B cell (primary cell): ENCODE measurements at regions of chr3 and their contacts with region 1.

Region 1: GRCh38 chr3:158097593-158098308 is 8.5 kb downstream of the SHOX2 start:
- DNase-seq: peak; percentile 90
- ATAC-seq: peak; percentile 93
- H3K4me3 ChIP-seq: peak overlapping the region; percentile 41 to 86 (median 72)
- H3K4me3 Mint-ChIP-seq: peak overlapping the region; percentile 97
- H3K27ac ChIP-seq: no peak overlapping the region
- H3K27ac Mint-ChIP-seq: peak overlapping the region; percentile 85
- H3K4me1 ChIP-seq: peaks cover 32 to 39% of the 10 kb centered on the region in 2 donors
- H3K4me1 Mint-ChIP-seq: peaks cover 23% of the 10 kb centered on the region
- H3K27me3 ChIP-seq: peaks cover 3 to 76% (median 69%) of the 10 kb centered on the region in 4 experiments
- H3K27me3 Mint-ChIP-seq: peaks cover 65% of the 10 kb centered on the region
- CTCF ChIP-seq: no peak

Region 2: GRCh38 chr3:158109804-158110657 is 12.3 kb after region 1 on chr3 and contains the start of gene RSRC1:
- CTCF ChIA-PET with region 1: interaction called, 8 read pairs
- POLR2A ChIA-PET with region 1: interaction called, 6 read pairs
- intact Hi-C with region 1: loop called (anchors 1 kb)
- DNase-seq: peak; percentile 89
- ATAC-seq: peak; percentile 87
- H3K4me3 ChIP-seq: peak within 1 kb of the TSS; percentile 85 to 93 (median 87)
- H3K4me3 Mint-ChIP-seq: peak within 1 kb of the TSS; percentile 87
- H3K27ac ChIP-seq: peak within 1 kb of the TSS; percentile 68 to 83
- H3K27ac Mint-ChIP-seq: peak within 1 kb of the TSS; percentile 75
- H3K4me1 ChIP-seq: peaks cover 42 to 54% of the 10 kb centered on the region in 2 donors
- H3K4me1 Mint-ChIP-seq: peaks cover 45% of the 10 kb centered on the region
- H3K27me3 ChIP-seq: peaks cover 4 to 40% (median 35%) of the 10 kb centered on the region in 4 experiments
- H3K27me3 Mint-ChIP-seq: peaks cover 35% of the 10 kb centered on the region
- CTCF ChIP-seq: no peak
- total RNA-seq, gene RSRC1: 46.3 and 54.6 TPM in 2 replicates